Panc1 (cell line): ENCODE measurements at regions of chr5 and their contacts with region 1.

Region 1: DNA sequence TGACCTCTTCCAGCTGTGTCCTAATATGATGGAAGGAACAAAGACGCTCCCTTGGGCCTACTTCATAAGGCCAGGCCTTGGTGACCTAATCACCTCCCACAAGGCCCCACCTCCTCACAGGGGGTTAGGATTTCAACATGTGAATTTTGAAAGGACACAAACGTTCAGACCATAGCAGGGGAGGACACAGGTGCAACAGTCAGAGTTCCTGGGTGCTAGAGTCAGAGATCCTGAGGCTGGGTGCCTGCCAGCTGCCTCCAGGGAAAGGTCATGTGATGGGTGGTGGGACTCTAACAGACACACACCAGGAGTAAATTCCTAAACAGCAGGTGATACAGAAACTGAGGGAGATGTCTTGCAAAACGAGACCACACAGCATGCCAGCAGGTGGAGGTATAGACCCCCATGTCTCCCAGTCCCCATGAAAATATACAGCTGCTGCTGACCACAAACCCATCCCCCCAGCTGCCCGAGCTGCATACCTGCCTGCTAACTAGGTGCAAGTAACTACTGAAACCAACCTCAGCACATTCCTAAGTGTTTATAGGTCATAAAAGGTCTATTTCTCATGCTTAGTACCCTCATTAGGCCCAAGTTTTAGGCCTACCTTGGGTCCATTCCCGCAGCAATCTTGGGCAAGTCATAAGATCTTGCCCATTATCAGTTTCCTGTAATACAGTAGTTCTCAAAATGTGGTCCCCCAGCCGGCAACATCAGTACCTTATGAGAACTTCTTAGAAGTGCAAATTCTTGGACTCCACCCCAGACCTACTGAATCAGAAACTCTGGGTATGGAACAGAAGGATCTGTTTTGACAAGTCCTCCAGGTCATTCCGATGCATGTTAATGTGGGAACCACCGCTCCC is 245.4 kb downstream of the ENC1 start:
- DNase-seq: no peak
- ATAC-seq: no peak
- H3K4me3 ChIP-seq: no peak overlapping the region
- H3K27ac ChIP-seq: no peak overlapping the region
- H3K4me1 ChIP-seq: no peaks in the 10 kb centered on the region
- H3K27me3 ChIP-seq: no peaks in the 10 kb centered on the region
- CTCF ChIP-seq: no peak

Region 2: DNA sequence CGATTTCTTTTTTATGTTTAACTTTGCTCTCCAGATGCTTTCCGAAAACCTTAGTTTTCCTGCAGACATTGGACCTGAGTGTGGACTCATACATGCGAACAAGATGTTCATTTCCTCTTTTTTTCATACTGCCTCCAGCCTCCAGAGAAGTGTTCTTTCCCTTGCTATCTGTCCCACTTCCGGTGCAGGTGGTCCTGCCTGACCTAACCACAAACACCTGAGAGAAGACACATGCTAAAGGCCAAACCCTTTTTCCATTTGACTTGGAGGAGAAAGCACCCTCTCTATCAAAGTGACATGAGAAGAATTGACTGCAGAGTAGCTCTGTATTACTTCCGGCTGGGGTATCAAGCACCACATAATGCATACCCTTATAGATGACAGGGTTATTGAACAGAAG is 435.1 kb before region 1 on chr5:
- CTCF ChIA-PET with region 1: no interaction called
- POLR2A ChIA-PET with region 1: interaction called, 12 read pairs
- in situ Hi-C with region 1: no loop called
- intact Hi-C with region 1: no loop called
- DNase-seq: no peak
- ATAC-seq: no peak
- H3K4me3 ChIP-seq: no peak overlapping the region
- H3K27ac ChIP-seq: no peak overlapping the region
- H3K4me1 ChIP-seq: no peaks in the 10 kb centered on the region
- H3K27me3 ChIP-seq: peaks cover 2% of the 10 kb centered on the region; the same call in 1 of the 2 replicates
- CTCF ChIP-seq: no peak

Region 3: DNA sequence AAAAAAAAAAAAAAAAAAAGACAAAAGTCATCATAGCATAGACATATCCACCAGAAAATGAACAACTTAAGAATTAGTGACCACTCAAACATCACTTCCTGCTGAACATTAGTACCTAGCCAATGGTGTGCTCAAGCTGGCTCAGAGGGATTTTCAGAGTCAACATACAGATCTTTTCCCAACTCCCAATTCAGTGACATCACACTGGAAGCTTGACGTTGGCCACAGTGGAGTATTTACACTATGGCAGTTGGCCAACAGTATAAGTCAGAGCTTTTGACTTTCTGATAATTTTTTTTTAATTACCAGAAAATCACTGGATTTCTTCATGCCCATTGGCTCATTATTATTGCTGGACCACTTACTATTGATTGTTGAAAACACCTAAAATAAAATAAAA is 385.6 kb before region 1 on chr5:
- CTCF ChIA-PET with region 1: no interaction called
- POLR2A ChIA-PET with region 1: no interaction called
- in situ Hi-C with region 1: no loop called
- intact Hi-C with region 1: no loop called
- DNase-seq: no peak
- ATAC-seq: no peak
- H3K4me3 ChIP-seq: no peak overlapping the region
- H3K27ac ChIP-seq: no peak overlapping the region
- H3K4me1 ChIP-seq: no peaks in the 10 kb centered on the region
- H3K27me3 ChIP-seq: no peaks in the 10 kb centered on the region
- CTCF ChIP-seq: no peak

Region 4: GRCh38 chr5:74810915-74811314 is 415.8 kb after region 1 on chr5:
- CTCF ChIA-PET with region 1: no interaction called
- POLR2A ChIA-PET with region 1: no interaction called
- in situ Hi-C with region 1: no loop called
- intact Hi-C with region 1: no loop called
- DNase-seq: no peak
- ATAC-seq: no peak
- H3K4me3 ChIP-seq: no peak overlapping the region
- H3K27ac ChIP-seq: no peak overlapping the region
- H3K4me1 ChIP-seq: no peaks in the 10 kb centered on the region
- H3K27me3 ChIP-seq: no peaks in the 10 kb centered on the region
- CTCF ChIP-seq: no peak